Activated CD4-positive, alpha-beta T cell treated with anti-CD3 and anti-CD28 coated beads, Interleukin-2, amount 10 ng/mL, durations not matched to agents 24 days and 14 days (primary cell): ENCODE measurements at regions of chr3 and their contacts with region 1.

Region 1: DNA sequence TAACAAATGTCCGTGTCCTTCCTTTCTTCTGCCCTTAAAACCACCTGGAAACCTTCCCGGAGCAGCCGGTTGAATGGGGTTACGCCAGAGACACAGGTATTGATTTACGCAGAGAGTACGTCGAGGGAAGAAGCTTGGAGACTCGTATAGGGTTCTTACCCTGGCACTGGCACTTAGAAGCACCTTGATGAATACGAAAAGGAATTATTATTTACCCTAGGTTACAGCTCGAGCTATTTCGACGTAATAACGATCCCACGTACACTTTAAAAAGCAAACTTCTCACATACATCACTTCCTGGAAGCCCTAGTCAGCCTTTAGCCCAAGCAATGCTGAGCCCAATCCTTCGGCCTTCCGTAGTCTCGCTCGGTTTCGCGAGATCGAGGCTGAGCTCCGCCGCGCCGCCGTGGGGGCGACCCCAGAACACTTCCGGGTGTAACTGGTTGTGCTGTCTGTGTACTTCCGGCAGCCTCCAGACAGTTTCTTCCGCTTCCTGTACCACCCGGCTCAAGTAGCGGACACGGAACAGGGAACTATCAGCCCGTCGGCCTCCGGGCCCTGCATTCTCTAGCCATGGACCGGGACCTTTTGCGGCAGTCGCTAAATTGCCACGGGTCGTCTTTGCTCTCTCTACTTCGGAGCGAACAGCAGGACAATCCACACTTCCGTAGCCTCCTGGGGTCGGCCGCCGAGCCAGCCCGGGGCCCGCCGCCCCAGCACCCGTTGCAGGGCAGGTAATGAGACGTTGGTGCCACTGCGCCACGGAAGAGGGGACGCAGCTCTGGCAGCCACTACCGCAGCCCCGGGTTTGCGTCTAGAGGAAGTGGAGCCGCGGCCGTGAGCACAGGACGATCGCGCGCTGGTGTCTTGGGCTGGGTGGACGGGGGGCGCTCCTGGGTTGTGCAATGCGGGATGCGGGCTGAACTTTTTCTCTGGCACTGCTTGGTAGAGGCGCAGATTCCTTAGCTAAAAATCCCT is at the start of gene TTC14:
- DNase-seq: peak; percentile 98
- H3K4me3 Mint-ChIP-seq: peak within 1 kb of the TSS; percentile 99
- H3K27ac Mint-ChIP-seq: peak within 1 kb of the TSS; percentile 96
- H3K4me1 Mint-ChIP-seq: peaks cover 20% of the 10 kb centered on the region
- H3K27me3 Mint-ChIP-seq: peaks cover 13% of the 10 kb centered on the region
- total RNA-seq, gene TTC14: 42.6 and 46.4 TPM in 2 replicates

Region 2: DNA sequence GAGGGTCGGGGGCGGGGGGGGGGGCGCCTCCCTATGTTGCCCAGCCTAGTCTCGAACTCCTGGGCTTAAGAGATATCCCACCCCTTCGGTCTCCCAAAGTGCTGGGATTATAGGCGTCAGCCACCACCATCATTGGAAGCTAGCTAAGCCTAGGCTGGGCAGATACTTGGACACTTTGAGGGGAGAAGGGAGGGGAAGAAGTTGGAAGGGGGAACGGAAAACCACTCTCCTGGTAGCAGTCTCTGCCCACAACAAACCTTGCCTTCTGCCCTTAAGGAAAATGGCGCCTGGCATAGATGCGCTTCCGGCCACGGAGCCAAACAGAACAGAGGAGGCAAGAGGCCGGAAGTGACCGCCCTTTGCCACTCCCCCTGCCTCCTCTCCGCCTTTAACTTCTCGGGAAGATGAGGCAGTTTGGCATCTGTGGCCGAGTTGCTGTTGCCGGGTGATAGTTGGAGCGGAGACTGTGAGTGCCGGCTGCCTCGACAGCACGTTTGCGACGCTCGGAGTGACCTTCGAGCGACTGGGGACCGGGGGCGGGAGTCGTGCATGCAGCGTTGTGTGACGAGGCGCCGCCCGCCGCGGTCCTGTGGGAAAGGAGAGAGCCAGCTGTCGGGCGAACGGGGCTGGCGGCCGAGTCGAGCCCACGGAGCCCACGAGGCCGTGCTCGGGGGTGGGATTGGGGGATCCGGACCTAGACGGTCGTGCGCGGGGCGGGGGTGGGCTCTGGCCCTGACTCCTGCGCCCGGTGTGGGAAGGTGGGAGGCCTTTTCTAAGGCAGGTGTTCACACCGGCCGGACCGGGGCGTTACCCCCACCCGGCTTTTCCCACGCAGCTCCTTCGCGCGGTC is 1254.4 kb before region 1 on chr3 and contains the start of gene MFN1:
- intact Hi-C with region 1: loop called (anchors 10 kb)
- DNase-seq: peak; percentile 97
- H3K4me3 Mint-ChIP-seq: peak within 1 kb of the TSS; percentile 100
- H3K27ac Mint-ChIP-seq: peak within 1 kb of the TSS; percentile 98
- H3K4me1 Mint-ChIP-seq: peaks cover 14% of the 10 kb centered on the region
- H3K27me3 Mint-ChIP-seq: no peaks in the 10 kb centered on the region
- total RNA-seq, gene MFN1: 36.2 and 37.0 TPM in 2 replicates

Region 3: GRCh38 chr3:179653096-179653797 is 948.7 kb before region 1 on chr3:
- intact Hi-C with region 1: loop called (anchors 1 kb)
- DNase-seq: peak; percentile 89
- H3K4me3 Mint-ChIP-seq: peak overlapping the region; percentile 93
- H3K27ac Mint-ChIP-seq: peak overlapping the region; percentile 92
- H3K4me1 Mint-ChIP-seq: peaks cover 17% of the 10 kb centered on the region
- H3K27me3 Mint-ChIP-seq: peaks cover 15% of the 10 kb centered on the region

Region 4: DNA sequence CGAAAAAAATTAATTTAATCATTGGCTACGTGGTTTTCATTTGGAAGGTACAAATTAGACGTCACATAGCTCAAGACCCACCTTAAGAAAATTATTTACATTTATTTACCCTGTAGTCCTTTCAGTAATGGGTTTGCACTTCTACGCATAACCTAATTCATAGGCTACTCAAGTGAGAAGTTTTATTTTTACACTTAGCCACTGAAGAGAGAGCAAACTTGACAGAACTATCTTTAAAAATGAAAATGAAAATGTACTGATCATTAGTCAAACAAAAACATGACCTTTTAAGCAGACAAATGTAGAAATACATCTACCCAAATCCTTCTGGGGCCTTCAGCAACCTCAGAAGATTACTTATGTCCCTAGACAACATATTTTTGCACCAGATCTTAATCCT is 269.4 kb before region 1 on chr3:
- intact Hi-C with region 1: no loop called
- DNase-seq: no peak
- H3K4me3 Mint-ChIP-seq: no peak overlapping the region
- H3K27ac Mint-ChIP-seq: no peak overlapping the region
- H3K4me1 Mint-ChIP-seq: no peaks in the 10 kb centered on the region
- H3K27me3 Mint-ChIP-seq: no peaks in the 10 kb centered on the region

Region 5: GRCh38 chr3:180633722-180634121 is 31.7 kb after region 1 on chr3:
- intact Hi-C with region 1: loop called (anchors 1 kb)
- DNase-seq: no peak
- H3K4me3 Mint-ChIP-seq: no peak overlapping the region
- H3K27ac Mint-ChIP-seq: no peak overlapping the region
- H3K4me1 Mint-ChIP-seq: peaks cover 2% of the 10 kb centered on the region
- H3K27me3 Mint-ChIP-seq: peaks cover 10% of the 10 kb centered on the region

Region 6: DNA sequence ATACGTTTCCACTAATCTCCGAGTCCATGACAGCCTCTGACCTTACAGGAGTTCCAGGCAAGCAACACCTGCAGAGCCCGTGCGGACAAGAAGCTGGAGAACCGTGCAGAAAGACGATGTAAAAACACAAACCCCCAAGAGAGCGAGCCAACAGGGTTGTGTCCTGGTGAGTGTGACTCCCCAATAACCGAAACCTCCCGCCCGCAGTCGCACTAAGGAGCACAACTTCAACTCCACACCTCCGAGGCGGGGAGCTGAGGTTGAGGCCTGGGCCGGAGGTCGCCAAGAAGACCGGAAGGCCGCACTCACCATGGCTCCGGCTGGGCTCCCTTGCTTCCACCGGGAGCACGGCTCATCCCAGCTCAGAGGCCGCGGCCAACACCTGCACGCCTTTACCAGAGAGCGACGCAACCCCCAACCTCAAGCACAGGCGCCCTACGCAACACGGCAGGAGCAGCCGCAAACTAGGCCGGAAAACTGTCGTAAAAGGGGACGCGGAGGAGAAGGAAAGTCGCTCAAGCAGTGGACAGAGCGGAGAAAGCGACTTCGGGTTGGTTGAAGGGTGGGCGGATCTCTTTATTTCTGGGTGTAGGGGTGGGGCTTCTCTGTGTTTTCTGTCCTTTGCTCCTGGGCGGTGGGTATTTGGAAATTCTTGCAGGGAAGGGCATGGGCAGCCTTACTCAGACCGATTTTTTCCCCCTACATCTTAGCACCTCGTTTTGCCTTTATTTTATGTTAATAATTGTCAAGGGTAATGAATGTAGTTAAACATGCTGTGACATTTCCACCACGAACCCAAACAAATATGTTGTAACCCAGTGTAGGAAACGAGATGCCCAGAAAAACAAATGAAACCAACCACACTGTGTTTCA is 387.6 kb after region 1 on chr3 and contains the start of gene DNAJC19:
- intact Hi-C with region 1: loop called (anchors 5 kb)
- DNase-seq: peak; percentile 97
- H3K4me3 Mint-ChIP-seq: peak within 1 kb of the TSS; percentile 97
- H3K27ac Mint-ChIP-seq: peak within 1 kb of the TSS; percentile 96
- H3K4me1 Mint-ChIP-seq: peaks cover 20% of the 10 kb centered on the region
- H3K27me3 Mint-ChIP-seq: peaks cover 10% of the 10 kb centered on the region
- total RNA-seq, gene DNAJC19: 53.7 and 62.6 TPM in 2 replicates